RWPE1 (cell line): ENCODE measurements at regions of chr2 and their contacts with region 1.

Region 1: DNA sequence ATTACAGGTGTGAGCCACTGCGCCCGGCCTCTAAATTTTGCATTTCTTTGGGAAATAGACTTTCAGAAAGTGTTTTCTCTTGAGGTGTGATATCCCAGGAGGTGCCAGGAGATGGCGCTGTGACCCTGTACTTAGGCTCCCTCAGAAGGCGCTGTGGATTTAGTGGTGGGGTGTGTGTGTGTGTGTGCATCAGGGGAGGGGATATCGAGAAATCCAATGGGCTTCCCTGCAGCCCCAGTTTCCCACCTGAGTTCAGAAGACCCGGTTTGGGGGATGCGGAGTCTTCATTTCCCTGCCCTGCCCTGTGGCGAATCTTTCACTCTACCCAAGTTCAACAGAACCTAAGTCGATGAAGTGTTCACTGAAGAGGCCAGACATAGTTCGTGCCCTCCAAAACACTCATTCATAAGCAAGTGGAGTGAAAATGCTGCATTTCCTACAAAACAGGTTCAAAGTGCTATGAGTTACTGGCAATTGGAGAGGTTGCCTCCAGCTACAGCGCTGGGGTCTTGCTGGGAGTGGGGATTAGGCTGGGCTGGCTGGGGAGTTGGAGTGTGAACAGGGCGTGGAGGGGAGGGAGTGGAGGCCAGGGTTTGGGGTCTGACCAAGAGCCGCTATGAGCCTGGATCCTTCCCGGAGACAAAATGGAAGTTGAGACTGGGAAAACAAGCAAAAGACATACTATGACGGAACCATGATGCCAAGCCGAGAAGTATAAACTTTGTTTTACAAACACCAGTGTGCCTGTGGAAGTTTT is 6.5 kb upstream of the WNT6 start:
- DNase-seq: no peak
- H3K27ac ChIP-seq: no peak overlapping the region
- CTCF ChIP-seq: peak; percentile 77

Region 2: DNA sequence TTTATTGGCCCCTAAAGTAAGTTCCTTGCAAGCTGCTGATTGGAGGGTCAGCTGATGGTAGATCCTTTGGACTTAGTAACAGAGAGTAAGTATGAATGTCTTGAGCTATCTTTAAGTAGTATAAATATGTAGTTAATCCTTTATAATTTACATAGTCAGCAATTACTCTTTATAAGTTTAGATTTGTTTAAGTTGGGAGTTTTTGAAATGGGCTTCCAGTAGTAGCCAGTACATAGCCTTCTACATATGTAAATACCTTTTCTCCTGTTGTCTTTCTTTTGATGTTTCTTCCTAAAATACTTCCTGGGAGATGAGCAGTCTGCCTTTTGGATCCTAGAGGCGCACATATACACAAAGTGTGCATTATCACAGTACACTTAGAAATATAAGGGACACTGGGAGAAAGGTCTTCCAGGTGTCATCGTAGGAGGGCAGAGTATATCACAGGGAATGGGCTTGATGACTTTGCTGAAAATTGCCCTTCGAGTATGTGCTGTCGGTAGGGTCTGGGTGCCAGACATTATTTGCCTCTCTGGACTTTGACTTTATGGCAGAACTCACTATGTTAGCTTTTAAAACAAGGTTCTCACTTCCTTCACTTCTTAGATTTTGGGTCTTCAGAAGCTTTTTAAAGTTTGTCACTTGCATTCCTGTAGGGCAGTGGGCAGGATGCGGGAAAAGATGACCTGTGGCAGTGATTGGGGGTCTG is 120.9 kb before region 1 on chr2:
- CTCF ChIA-PET with region 1: interaction called, 11 read pairs
- POLR2A ChIA-PET with region 1: no interaction called
- DNase-seq: no peak
- H3K27ac ChIP-seq: no peak overlapping the region
- CTCF ChIP-seq: no peak